H1 (cell line): ENCODE measurements at regions of chr2 and their contacts with region 1.

Region 1: DNA sequence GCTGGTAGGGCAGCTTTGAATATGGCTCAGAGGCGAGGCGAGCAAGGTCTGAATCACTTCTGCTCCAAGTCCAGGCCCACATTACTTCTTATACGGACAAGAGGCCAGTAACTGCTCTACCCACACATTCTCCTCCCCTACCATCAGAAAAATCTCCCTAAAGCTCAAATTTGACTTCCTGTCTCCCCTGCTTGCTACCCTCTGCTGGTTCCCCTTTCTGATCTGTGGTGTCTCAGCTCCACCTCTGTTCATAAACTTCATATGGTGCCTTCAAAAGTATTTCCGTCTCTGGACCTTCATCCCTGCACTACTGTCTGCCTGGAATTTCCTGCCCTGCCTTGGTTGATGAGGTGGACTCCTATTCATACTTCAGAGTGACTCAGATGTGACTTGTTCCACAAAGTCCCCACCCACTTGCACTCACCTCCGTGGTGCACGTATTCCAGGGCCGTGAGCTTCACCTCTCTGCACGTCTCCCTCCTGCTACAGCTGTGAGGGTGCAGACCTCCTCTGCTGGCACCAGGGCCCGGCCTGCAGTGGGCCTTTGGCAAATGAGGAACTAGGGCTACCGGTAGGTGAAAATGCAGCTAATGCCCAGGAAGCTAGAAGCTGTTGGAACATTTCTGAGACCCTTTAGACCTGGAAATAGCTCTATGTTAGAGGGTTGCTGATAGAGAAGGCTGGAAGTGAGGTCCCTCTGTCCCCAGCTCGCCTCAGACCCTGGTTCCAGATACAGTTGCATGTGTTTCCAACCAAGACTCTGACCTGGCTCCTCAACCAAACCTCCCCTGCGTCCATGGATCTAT is 24.6 kb upstream of the KCMF1 start:
- DNase-seq: no peak
- H3K4me3 ChIP-seq: no peak overlapping the region
- H3K27ac ChIP-seq: no peak overlapping the region
- H3K4me1 ChIP-seq: peaks cover 6 to 8% (median 6%) of the 10 kb centered on the region in 4 experiments; a peak in 6 of 7 replicates
- H3K27me3 ChIP-seq: no peaks in the 10 kb centered on the region
- CTCF ChIP-seq: no peak
- EP300 ChIP-seq: no peak
- POLR2A ChIP-seq: no peak
- RAD21 ChIP-seq: no peak

Region 2: GRCh38 chr2:84450288-84451227 is 495.8 kb before region 1 on chr2:
- CTCF ChIA-PET with region 1: no interaction called
- POLR2A ChIA-PET with region 1: no interaction called
- DNase-seq: no peak
- H3K4me3 ChIP-seq: no peak overlapping the region
- H3K27ac ChIP-seq: no peak overlapping the region
- H3K4me1 ChIP-seq: no peaks in the 10 kb centered on the region
- H3K27me3 ChIP-seq: no peaks in the 10 kb centered on the region
- CTCF ChIP-seq: no peak
- EP300 ChIP-seq: no peak
- POLR2A ChIP-seq: no peak
- RAD21 ChIP-seq: no peak

Region 3: DNA sequence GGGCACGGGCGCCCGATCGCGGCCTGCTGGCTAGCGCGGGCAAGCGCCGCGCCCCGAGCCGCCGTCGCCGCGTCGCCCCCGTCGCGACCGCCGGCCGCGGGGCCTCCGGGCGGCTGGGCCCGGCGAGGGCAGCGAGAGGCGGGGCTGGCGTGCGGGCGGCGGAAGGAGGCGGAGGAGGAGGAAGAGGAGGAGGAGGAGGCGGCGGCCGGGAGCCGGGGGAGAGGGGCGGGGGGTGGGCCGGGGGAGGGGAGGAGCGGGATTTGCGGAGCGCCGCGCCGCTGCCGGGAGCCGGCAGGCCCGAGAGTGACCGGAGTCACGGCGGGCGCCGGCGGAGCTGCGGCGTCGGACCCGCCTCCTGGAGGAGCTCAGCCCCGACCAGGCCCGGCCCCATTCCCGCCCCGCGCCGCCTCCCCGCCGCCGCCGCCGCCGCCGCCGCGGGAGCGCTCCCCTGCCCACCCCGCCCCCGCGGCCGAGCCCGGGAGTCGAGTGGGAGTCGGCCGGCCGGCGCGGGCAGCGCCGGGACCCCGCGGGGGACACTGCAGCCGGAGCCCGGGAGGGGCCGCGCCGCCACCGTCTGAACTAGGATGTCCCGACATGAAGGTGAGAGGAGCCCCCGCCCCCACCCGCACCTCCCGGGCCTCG is 24.6 kb after region 1 on chr2 and contains the start of gene KCMF1:
- CTCF ChIA-PET with region 1: interaction called, 4 read pairs
- POLR2A ChIA-PET with region 1: interaction called, 18 read pairs
- DNase-seq: peak in 1 of 2 experiments; percentile 70
- H3K4me3 ChIP-seq: peak within 1 kb of the TSS; percentile 95 to 99 (median 96)
- H3K27ac ChIP-seq: peak within 1 kb of the TSS; percentile 95
- H3K4me1 ChIP-seq: peaks cover 0 to 9% (median 9%) of the 10 kb centered on the region in 4 experiments; a peak in 5 of 7 replicates
- H3K27me3 ChIP-seq: no peaks in the 10 kb centered on the region
- CTCF ChIP-seq: no peak
- EP300 ChIP-seq: no peak
- POLR2A ChIP-seq: peak in 1 of 2 experiments; percentile 32; a peak in 1 of 3 replicates
- RAD21 ChIP-seq: no peak
- total RNA-seq, gene KCMF1: 149 and 152 TPM in 2 replicates